ENCODE measurements at regions of chr20 and their contacts with region 1.

Region 1: GRCh38 chr20:51800060-51800794 is 2.1 kb downstream of the SALL4 start:
- DNase-seq: peak; percentile 38
- H3K4me3 Mint-ChIP-seq: peak overlapping the region; percentile 74
- H3K27ac Mint-ChIP-seq: peak overlapping the region; percentile 44
- H3K4me1 Mint-ChIP-seq: peaks cover 3% of the 10 kb centered on the region
- H3K27me3 Mint-ChIP-seq: peaks cover 72% of the 10 kb centered on the region

Region 2: DNA sequence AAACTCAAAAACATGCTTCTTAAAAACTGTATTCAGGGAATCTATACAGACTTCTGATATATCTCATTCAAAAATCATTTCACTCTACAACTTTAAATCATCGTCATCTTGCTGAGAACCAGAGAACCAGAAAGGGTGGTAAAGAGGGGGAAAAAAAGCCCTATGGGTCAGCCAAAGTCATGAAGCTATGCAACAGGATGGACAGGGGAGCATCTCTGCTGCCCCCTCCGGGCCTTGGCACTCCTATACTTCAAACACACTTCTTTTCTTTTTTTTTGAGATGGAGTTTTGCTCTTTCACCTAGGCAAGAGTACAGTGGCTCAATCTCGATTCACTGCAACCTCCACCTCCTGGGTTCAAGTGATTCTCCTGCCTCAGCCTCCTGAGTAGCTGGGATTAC is 184.2 kb before region 1 on chr20:
- intact Hi-C with region 1: no loop called
- DNase-seq: no peak
- H3K4me3 Mint-ChIP-seq: no peak overlapping the region
- H3K27ac Mint-ChIP-seq: no peak overlapping the region
- H3K4me1 Mint-ChIP-seq: no peaks in the 10 kb centered on the region
- H3K27me3 Mint-ChIP-seq: peaks cover 9% of the 10 kb centered on the region

Region 3: GRCh38 chr20:51767010-51767558 is 33.1 kb before region 1 on chr20:
- intact Hi-C with region 1: loop called (anchors 2 kb)
- DNase-seq: peak; percentile 60
- H3K4me3 Mint-ChIP-seq: peak overlapping the region; percentile 69
- H3K27ac Mint-ChIP-seq: no peak overlapping the region
- H3K4me1 Mint-ChIP-seq: peaks cover 9% of the 10 kb centered on the region
- H3K27me3 Mint-ChIP-seq: peaks cover 27% of the 10 kb centered on the region